Activated CD4-positive, alpha-beta T cell treated with anti-CD3 and anti-CD28 coated beads for 36 hours (primary cell): ENCODE measurements at regions of chr9 and their contacts with region 1.

Region 1: DNA sequence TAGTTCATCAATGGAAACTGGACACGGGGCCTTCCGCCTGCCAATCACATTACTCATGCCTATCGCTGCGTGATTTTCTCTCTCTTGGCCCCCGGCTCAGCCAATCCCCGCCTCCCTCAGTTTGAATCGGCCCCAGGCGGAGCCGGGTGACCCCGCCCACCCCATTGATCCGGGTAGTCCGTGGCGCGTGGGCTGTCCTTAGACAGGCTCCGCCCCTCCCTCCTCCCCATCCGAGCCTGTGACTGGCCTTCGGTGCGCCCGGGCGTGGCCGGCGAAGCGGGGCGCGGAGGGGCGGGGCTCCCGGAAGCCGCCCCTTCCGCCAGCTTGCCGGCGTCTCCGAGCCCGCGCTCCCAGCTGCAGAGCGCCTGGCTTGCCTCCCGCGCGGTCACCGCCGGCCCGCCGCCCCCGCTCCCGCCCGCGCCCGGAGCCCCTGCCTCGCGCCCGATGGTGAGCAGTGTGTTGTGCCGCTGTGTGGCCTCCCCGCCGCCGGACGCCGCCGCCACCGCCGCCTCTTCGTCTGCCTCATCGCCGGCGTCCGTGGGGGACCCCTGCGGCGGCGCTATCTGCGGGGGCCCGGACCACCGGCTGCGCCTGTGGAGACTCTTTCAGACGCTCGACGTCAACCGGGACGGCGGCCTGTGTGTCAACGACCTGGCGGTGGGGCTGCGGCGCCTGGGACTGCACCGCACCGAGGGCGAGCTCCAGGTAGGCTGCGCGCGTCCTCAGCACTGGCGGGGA is at the start of gene SLC25A25:
- DNase-seq: peak; percentile 100
- ATAC-seq: peak; percentile 84
- H3K4me3 Mint-ChIP-seq: no peak within 1 kb of the TSS
- H3K27ac Mint-ChIP-seq: peak within 1 kb of the TSS; percentile 90
- H3K4me1 Mint-ChIP-seq: peaks cover 53% of the 10 kb centered on the region
- H3K27me3 Mint-ChIP-seq: no peaks in the 10 kb centered on the region
- total RNA-seq, gene SLC25A25: 6.9 to 10.8 TPM

Region 2: DNA sequence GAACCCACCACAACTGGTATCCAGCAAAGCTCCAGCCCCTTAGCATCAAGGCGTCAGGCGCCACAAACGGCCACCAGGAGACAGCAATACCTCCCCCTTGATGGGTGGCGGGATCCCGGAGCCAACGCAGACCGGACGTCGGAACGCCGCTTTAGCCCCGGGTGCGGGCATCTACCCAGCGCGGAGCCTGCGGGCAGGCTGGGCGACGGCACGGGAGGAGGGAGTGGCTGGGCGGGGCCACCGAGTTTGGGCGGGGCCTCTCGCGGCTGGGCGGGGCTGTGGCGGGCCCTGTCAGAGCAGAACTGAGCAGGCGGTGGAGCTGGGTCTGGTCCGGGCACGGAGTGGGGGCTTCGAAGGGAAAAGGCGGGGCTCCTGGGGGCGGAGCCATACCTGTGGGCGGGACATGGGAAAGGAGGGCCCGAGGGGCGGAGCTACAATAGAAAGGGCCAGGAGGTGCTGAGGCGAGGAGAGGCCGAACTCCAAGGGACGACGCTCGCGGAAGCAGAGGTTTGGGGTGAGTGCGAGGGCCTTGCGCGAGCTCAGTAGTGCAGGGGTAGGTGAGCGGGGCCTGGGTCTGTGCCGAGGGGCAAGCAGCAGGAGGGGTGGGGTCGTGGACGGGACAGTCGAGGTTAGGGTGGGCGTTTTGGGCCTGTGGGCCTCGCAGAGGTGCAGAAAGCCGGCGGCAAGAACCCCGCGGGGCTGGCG is 843.7 kb before region 1 on chr9:
- CTCF ChIA-PET with region 1: no interaction called
- POLR2A ChIA-PET with region 1: no interaction called
- intact Hi-C with region 1: loop called in 1 of 2 experiments (anchors 10 kb)
- DNase-seq: peak; percentile 93
- ATAC-seq: peak; percentile 79
- H3K4me3 Mint-ChIP-seq: peak overlapping the region; percentile 68
- H3K27ac Mint-ChIP-seq: peak overlapping the region; percentile 16
- H3K4me1 Mint-ChIP-seq: peaks cover 24% of the 10 kb centered on the region
- H3K27me3 Mint-ChIP-seq: peaks cover 15% of the 10 kb centered on the region

Region 3: DNA sequence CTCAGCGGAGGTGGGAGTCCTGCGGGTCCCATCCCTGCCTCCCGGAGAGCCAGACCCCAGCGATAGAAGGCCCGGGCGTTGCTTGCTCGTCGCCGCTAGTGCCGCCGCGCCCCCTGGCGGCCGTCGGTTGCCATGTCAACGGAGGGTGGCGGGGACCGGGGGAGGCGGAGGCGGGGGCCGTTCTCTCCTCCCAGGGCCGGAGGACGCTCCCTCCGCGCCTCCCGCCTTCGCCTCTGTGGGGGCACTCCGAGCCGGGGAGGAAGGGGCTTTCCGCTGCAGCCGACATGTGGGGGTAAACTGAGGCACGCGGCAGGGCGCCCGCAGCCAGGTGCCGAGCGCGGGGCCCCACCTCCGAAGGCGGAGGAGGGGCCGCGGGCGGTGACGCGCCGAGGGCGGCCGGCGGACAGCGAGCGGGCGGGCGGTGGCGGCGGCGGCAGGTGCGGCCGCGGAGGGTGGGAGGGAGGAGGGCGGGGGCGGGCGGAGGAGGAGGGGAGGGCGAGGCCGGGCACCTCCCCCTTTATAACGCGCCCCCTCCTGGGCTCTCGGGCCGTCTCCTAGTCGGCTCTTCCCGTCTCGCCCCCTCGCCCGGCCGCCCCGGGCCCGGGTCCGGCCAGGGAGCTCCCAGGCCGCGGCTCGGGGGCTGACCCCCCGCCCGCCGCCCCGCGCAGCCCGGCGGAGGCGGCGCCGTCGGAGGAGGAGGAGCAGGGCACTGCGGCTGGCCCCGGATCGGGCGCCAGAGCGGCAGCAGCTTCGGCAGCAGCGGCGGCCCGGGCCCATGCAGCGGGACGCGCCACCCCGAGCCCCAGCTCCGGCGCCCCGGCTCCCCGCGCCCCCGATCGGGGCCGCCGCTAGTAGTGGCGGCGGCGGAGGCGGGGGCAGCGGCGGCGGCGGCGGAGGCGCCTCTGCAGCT is 282.8 kb before region 1 on chr9:
- CTCF ChIA-PET with region 1: no interaction called
- POLR2A ChIA-PET with region 1: no interaction called
- intact Hi-C with region 1: loop called (anchors 1 to 10 kb)
- DNase-seq: peak; percentile 93
- ATAC-seq: peak; percentile 34
- H3K4me3 Mint-ChIP-seq: peak overlapping the region; percentile 97
- H3K27ac Mint-ChIP-seq: peak overlapping the region; percentile 97
- H3K4me1 Mint-ChIP-seq: peaks cover 74% of the 10 kb centered on the region
- H3K27me3 Mint-ChIP-seq: no peaks in the 10 kb centered on the region

Region 4: DNA sequence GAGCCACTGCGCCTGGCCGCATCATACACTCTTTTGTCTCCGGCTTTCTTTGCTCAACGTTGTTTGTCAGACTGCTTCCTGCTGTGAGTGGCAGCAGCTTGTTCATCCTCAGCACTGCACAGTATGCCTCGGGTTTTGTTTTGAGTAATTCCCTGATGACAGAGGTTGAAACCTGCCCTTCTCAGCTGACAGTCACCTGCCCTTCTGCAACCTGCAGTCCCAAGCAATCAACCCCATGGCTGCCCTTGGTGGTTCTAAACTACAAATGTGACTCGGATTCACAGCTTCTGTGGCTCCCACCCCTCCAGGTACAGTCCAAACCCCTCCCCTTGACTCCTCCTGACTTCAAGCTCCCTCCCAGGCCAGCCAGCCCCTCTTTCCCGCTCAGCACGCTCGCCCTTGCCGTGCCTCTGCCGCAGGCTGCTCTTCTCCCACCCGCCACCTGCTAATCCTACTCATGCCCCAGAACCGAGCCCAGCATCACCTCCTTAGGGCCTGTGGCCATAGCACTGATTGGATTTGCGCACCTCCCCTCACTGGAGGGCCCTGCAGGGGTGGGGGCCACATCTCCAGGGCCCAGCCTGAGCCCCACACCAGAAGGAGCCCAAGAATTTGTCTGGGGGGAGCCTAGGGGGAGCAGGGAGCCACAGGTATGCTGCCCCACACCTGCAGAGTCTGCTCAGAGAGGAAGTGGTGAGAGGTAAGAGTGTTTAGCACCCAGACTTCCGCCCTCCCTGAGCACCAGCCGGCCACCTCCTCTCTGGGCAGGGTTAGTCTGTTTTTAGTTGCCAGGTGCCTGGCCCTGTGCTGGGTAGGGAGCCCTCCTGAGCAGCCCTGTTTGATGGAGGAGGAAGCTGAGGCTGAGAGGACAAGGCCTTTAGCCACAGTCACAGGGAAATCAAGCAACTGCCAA is 97.4 kb before region 1 on chr9:
- CTCF ChIA-PET with region 1: no interaction called
- POLR2A ChIA-PET with region 1: no interaction called
- intact Hi-C with region 1: loop called in 1 of 2 experiments (anchors 1 kb)
- DNase-seq: peak; percentile 87
- ATAC-seq: peak; percentile 76
- H3K4me3 Mint-ChIP-seq: peak overlapping the region; percentile 69
- H3K27ac Mint-ChIP-seq: peak overlapping the region; percentile 92
- H3K4me1 Mint-ChIP-seq: peaks cover 97% of the 10 kb centered on the region
- H3K27me3 Mint-ChIP-seq: no peaks in the 10 kb centered on the region

Region 5: GRCh38 chr9:128094166-128094967 is 26.3 kb after region 1 on chr9:
- CTCF ChIA-PET with region 1: interaction called, 12 read pairs
- POLR2A ChIA-PET with region 1: interaction called, 10 read pairs
- intact Hi-C with region 1: loop called (anchors 1 kb)
- DNase-seq: peak; percentile 93
- ATAC-seq: peak; percentile 94
- H3K4me3 Mint-ChIP-seq: peak overlapping the region; percentile 61
- H3K27ac Mint-ChIP-seq: peak overlapping the region; percentile 97
- H3K4me1 Mint-ChIP-seq: peaks cover 84% of the 10 kb centered on the region
- H3K27me3 Mint-ChIP-seq: no peaks in the 10 kb centered on the region

Region 6: DNA sequence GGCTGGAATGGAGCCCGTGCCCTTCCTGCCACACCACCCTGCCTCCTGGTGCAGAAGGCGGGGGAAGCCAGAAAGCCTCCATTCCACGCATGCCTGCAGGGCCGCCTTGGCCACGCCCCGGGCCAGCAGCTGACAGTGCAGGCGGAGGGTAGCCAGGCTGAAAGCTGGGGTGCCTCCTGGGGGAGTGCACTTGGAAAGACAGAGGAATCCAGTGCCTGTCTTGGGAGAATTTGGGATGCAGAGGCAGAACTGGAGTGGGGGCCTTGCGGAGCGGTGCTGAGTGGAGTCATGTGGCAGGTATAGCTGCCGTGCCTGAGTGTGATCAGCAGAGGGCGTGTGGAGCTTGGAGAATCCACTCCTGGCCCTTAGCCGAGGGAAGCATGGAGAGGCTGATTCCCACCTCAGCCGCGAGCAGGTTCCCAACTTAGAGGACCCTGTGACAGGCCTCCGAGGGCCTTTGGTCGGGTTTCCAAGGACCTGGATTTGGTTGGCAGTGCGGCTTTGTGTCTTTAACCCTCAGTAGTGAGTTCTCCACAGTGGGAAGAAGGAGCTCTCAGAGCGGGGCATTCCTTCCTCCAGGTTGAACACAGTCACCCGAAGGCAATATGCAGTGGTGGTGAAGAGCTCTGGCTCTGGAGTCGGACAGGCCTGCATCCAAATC is 294.1 kb after region 1 on chr9:
- CTCF ChIA-PET with region 1: no interaction called
- POLR2A ChIA-PET with region 1: no interaction called
- intact Hi-C with region 1: loop called in 1 of 2 experiments (anchors 2 kb)
- DNase-seq: peak; percentile 85
- ATAC-seq: peak; percentile 93
- H3K4me3 Mint-ChIP-seq: peak overlapping the region; percentile 62
- H3K27ac Mint-ChIP-seq: peak overlapping the region; percentile 59
- H3K4me1 Mint-ChIP-seq: peaks cover 19% of the 10 kb centered on the region
- H3K27me3 Mint-ChIP-seq: no peaks in the 10 kb centered on the region